Activated CD4-positive, alpha-beta T cell treated with anti-CD3 and anti-CD28 coated beads for 36 hours (primary cell): ENCODE measurements at regions of chr7 and their contacts with region 1.

Region 1: DNA sequence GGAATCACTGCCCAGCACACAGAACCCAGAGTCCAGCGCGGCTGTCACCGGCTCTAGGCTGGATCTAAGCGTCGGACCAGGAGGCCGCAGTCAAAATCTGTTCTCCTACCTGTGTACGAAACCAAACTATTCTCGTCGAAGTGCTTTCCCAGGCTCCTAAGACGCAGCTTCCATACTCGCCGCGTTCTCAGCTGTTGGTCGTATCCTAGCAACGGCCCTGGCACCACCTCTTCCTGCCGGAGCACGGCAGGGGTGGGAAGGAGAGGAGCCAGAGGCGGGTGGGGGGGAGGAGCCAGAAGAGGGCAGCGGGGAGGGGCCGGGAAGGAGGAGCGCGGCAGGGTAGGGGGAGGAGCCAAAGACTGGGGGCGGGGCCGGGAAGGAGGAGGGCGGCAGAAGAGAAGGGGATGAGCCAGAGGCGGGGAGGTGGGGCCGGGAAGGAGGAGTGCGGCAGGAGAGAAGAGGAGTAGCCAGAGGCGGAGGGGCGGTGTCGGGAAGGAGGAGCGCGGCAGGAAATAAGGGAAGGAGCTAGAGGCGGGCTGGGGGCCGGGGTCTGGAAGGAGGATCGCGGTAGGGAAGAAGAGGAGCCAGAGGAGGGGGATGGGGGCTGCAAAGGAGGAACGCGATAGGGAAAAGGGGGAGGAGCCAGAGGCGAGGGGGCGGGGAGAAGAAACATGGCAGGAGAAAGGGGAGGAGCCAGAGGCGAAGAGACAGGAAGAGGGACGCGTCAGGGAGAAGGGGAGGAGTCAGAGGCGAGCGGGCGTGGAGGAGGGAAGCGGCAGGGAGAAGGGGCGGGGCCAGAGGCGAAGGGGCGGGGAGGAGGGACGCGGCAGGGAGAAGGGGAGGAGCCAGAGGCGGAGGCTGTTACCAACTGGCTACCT is at the start of gene IQUB:
- DNase-seq: peak; percentile 99
- ATAC-seq: peak; percentile 88
- H3K4me3 Mint-ChIP-seq: peak within 1 kb of the TSS; percentile 87
- H3K27ac Mint-ChIP-seq: peak within 1 kb of the TSS; percentile 90
- H3K4me1 Mint-ChIP-seq: peaks cover 27% of the 10 kb centered on the region
- H3K27me3 Mint-ChIP-seq: peaks cover 16% of the 10 kb centered on the region
- total RNA-seq, gene IQUB: 0.05 TPM in 1 of 2 experiments, not detected in the other

Region 2: GRCh38 chr7:123367484-123368122 is 167.0 kb before region 1 on chr7:
- CTCF ChIA-PET with region 1: no interaction called
- POLR2A ChIA-PET with region 1: no interaction called
- intact Hi-C with region 1: no loop called
- DNase-seq: peak; percentile 27
- ATAC-seq: peak; percentile 47
- H3K4me3 Mint-ChIP-seq: no peak overlapping the region
- H3K27ac Mint-ChIP-seq: no peak overlapping the region
- H3K4me1 Mint-ChIP-seq: no peaks in the 10 kb centered on the region
- H3K27me3 Mint-ChIP-seq: no peaks in the 10 kb centered on the region

Region 3: GRCh38 chr7:123557398-123558288 is 23.0 kb after region 1 on chr7 and contains the start of gene NDUFA5:
- CTCF ChIA-PET with region 1: interaction called, 4 read pairs
- POLR2A ChIA-PET with region 1: no interaction called
- intact Hi-C with region 1: loop called (anchors 1 kb)
- DNase-seq: peak; percentile 97
- ATAC-seq: peak; percentile 98
- H3K4me3 Mint-ChIP-seq: no peak within 1 kb of the TSS
- H3K27ac Mint-ChIP-seq: no peak within 1 kb of the TSS
- H3K4me1 Mint-ChIP-seq: peaks cover 18% of the 10 kb centered on the region
- H3K27me3 Mint-ChIP-seq: peaks cover 3% of the 10 kb centered on the region
- total RNA-seq, gene NDUFA5: 62.3 to 64.0 TPM

Region 4: GRCh38 chr7:123823898-123824753 is 289.5 kb after region 1 on chr7:
- CTCF ChIA-PET with region 1: no interaction called
- POLR2A ChIA-PET with region 1: no interaction called
- intact Hi-C with region 1: loop called in 1 of 2 experiments (anchors 5 kb)
- DNase-seq: peak; percentile 81
- ATAC-seq: peak; percentile 90
- H3K4me3 Mint-ChIP-seq: peak overlapping the region; percentile 56
- H3K27ac Mint-ChIP-seq: peak overlapping the region; percentile 68
- H3K4me1 Mint-ChIP-seq: peaks cover 23% of the 10 kb centered on the region
- H3K27me3 Mint-ChIP-seq: peaks cover 15% of the 10 kb centered on the region

Region 5: GRCh38 chr7:124929467-124930172 is 1395.0 kb after region 1 on chr7 and contains the start of gene POT1:
- CTCF ChIA-PET with region 1: no interaction called
- POLR2A ChIA-PET with region 1: interaction called, 4 read pairs
- intact Hi-C with region 1: loop called (anchors 10 kb)
- DNase-seq: peak; percentile 98
- ATAC-seq: peak; percentile 100
- H3K4me3 Mint-ChIP-seq: peak within 1 kb of the TSS; percentile 100
- H3K27ac Mint-ChIP-seq: peak within 1 kb of the TSS; percentile 99
- H3K4me1 Mint-ChIP-seq: peaks cover 37% of the 10 kb centered on the region
- H3K27me3 Mint-ChIP-seq: no peaks in the 10 kb centered on the region
- total RNA-seq, gene POT1: 33.9 to 51.3 TPM